MCF 10A (cell line): ENCODE measurements at regions of chr1 and their contacts with region 1.

Region 1: DNA sequence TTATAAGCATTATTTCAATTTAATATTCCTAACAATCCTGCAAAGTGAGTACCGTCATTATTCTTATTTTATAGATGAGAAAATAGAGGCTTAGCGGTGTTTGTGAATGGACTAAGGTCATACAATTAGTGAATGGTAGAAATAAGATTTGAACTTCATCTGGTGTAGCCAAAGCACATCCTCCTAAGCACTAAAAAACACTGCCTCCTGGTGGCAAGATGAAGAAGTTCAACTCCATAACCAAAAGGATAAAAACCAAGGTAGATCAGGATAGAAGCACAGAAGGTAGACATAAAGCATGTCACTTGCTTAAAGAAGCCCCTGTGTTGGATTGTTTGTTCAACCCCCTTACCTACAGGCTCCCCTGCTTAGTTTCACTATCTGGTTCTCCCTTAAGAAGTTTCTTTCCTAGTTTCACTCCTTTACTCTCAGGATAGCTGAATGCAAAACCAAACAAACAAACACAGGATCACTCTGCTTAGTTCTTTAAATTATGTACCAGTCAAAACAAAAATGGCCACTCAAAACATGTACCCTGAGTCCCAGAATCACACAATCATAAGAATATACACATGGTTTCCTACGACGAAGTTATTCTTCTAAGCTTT is 12.7 kb upstream of the AIM2 start:
- DNase-seq: peak; percentile 29
- H3K4me3 Mint-ChIP-seq: no peak overlapping the region
- H3K27ac Mint-ChIP-seq: no peak overlapping the region
- H3K4me1 Mint-ChIP-seq: peaks cover 32% of the 10 kb centered on the region
- H3K27me3 Mint-ChIP-seq: no peaks in the 10 kb centered on the region
- CTCF ChIP-seq: peak; percentile 52

Region 2: DNA sequence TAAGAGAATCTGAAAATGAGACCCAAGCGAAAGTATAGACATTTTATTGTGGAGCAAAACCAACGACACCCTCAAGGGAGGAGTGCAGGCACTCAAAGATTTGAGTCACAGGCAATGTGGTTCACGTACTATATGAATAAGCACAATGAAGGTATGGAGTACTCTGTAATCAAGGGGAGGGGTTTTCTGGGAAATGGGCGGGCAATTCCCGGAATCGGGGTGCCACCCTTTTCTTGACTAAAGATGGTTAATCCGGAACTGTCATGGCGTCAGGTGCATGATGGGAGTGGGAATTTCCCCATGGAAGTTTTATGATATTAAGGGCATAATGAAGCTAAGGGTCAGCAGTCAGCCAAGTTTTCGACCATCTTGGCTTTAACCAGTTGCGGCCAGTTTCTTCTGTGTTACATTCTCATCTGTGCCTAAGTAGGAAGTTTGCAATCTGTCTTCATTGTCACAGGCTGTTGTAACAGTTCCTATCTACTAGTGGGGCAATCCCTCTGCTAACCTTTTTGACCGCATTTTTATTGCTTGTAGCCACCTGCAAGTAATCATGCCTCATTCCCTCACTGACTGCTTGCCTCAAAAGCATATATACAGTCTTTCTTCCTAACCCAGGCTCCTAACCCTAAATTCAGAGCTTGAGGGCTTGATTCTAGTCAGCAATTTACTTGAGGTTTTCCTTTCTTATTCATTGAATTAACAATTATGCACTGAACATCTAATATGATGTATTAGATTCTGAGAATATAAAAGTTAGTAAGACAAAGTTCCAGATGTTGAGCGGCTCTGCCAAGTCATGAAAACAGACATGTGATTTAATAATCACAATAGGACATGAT is 11.9 kb before region 1 on chr1:
- CTCF ChIA-PET with region 1: interaction called, 43 read pairs
- POLR2A ChIA-PET with region 1: interaction called, 6 read pairs
- intact Hi-C with region 1: no loop called
- DNase-seq: no peak
- H3K4me3 Mint-ChIP-seq: no peak overlapping the region
- H3K27ac Mint-ChIP-seq: no peak overlapping the region
- H3K4me1 Mint-ChIP-seq: no peaks in the 10 kb centered on the region
- H3K27me3 Mint-ChIP-seq: no peaks in the 10 kb centered on the region
- CTCF ChIP-seq: no peak